ENCODE measurements at regions of chr7 and their contacts with region 1.

Region 1: GRCh38 chr7:2384354-2385243 is 18.8 kb upstream of the CHST12 start:
- DNase-seq: no peak
- H3K4me3 Mint-ChIP-seq: no peak overlapping the region
- H3K27ac Mint-ChIP-seq: no peak overlapping the region
- H3K4me1 Mint-ChIP-seq: no peaks in the 10 kb centered on the region
- H3K27me3 Mint-ChIP-seq: no peaks in the 10 kb centered on the region

Region 2: DNA sequence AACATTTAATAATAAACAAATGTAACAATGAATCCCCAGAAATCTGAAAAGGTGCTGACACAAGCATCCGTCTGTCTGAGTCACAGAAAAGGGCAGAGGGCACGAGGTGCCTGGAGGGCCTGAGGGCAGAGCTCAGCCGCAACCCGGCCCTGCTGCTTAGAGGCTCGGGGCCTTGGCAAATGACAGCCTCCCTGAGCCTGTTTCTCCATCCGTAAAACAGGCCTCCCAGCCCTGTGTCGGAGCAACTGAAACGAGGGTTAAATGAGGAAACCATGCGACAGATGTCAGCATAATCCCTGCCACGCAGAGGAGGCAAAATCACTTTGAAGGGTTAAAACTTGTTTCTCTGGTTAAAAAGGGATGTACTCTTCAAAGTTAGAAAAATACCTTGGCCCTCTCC is 117.7 kb before region 1 on chr7:
- CTCF ChIA-PET with region 1: no interaction called
- intact Hi-C with region 1: no loop called
- DNase-seq: no peak
- H3K4me3 Mint-ChIP-seq: no peak overlapping the region
- H3K27ac Mint-ChIP-seq: no peak overlapping the region
- H3K4me1 Mint-ChIP-seq: peaks cover 3% of the 10 kb centered on the region
- H3K27me3 Mint-ChIP-seq: no peaks in the 10 kb centered on the region

Region 3: DNA sequence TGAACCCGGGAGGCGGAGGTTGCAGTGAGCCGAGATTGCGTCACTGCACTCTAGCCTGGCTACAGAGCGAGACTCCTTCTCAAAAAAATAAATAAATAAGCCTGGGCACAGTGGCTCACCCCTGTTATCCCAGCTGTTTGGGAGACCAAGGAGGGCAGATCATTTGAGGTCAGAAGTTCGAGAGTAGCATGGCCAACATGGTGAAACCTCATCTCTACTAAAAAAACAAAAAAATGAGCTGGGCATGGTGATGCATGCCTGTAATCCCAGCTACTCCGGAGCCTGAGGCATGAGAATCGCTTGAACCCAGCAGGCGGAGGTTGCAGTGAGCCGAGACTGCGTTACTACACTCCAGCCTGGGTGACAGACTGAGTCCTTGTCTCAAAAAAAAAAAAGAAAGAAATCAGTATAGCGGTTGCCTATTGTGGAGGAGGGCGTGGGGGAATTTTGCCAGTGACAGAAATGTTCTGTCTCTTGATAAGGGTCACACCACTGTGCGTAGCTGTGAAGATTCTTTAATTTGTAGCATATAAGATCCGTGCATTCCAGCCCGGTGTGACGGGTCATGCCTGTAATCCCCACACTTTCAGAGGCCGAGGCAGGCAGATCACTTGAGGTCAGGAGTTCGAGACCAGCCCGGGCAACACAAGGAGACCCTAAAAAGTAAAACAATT is 47.8 kb before region 1 on chr7:
- CTCF ChIA-PET with region 1: no interaction called
- intact Hi-C with region 1: no loop called
- DNase-seq: no peak
- H3K4me3 Mint-ChIP-seq: no peak overlapping the region
- H3K27ac Mint-ChIP-seq: no peak overlapping the region
- H3K4me1 Mint-ChIP-seq: no peaks in the 10 kb centered on the region
- H3K27me3 Mint-ChIP-seq: no peaks in the 10 kb centered on the region

Region 4: DNA sequence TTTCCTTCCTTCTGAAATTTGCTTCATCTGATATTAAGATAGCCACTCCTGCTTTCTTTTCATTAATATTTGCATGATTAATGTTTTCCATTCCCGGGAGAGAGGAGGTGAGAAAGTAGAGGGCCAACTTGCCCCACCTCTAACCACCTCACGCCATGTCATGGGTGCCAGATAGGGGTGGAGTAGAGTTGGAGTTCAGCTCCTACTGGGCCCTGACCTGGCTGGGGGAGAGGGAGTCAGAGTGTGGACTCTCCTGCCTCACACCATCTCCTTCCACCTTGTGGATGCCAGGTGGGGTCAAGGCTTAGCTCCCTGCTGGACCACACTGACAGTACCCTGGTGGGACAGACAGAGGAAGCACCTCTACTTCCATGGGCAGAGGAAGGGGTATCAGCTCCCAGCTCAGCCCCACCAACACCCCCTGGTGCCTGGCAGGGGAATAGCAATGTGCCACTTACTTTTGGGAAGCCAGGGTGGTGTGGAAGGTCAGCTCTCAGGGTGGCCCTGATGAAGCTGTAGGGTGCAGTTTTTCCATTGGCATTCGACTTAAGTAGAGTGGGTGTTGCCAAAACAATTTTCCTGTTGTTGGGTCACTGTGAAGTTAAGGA is 46.8 kb after region 1 on chr7:
- CTCF ChIA-PET with region 1: interaction called, 7 read pairs
- intact Hi-C with region 1: loop called (anchors 2 kb)
- DNase-seq: peak; percentile 50
- H3K4me3 Mint-ChIP-seq: no peak overlapping the region
- H3K27ac Mint-ChIP-seq: no peak overlapping the region
- H3K4me1 Mint-ChIP-seq: no peaks in the 10 kb centered on the region
- H3K27me3 Mint-ChIP-seq: no peaks in the 10 kb centered on the region

Region 5: GRCh38 chr7:2471396-2471795 is 86.8 kb after region 1 on chr7:
- CTCF ChIA-PET with region 1: interaction called, 6 read pairs
- intact Hi-C with region 1: loop called (anchors 1 kb)
- DNase-seq: no peak
- H3K4me3 Mint-ChIP-seq: no peak overlapping the region
- H3K27ac Mint-ChIP-seq: no peak overlapping the region
- H3K4me1 Mint-ChIP-seq: peaks cover 4% of the 10 kb centered on the region
- H3K27me3 Mint-ChIP-seq: peaks cover 6% of the 10 kb centered on the region

Measured in activated naive CD4-positive, alpha-beta T cell treated with anti-CD3 and anti-CD28 coated beads for 36 hours (primary cell).